ENCODE measurements at regions of chr14 and their contacts with region 1.

Region 1: DNA sequence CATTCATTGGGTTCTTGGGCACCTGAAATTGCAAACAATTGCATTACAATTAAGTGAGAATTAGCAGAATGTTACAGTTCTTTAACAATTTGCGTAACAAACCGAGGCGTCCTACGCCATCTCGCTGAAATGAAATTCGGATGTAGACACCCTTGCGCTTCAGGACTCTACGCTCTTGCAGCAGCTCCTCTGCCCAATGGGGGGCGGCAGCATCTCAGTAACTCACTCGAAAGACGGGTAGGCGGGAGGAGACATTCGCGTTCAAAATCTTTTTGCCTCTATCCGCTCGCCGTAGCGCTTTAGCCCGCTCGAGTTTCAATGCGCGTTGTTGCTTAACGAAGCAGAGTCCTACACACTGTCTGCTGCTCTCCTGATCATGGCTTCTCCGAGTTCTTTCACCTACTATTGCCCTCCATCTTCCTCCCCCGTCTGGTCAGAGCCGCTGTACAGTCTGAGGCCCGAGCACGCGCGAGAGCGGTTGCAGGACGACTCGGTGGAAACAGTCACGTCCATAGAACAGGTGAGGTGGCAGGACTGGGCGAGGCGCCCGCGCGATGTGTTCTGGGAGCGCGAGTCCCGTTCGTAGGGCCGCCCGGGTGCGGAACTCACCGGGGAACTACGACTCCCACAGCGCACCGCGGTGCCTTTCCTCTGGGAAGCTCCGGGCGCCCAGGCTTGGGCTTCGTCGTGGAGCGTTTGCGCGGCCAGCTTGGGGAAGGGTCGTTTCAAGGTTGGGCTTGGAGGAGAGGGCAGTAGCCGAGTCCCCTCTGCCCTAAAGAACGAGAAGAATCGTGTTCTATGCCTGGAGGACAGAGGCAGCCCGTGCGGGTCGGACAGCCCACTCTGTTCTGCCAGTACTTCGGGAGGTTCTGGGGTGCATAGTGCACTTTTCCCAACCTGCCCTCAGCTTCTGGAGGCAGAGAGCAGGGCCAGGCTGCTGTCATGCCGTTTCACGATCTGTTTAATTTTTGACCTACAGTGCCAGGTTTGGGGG is at the start of gene FNTB:
- DNase-seq: peak; percentile 93 to 96 (median 96)
- H3K4me3 ChIP-seq: peak within 1 kb of the TSS; percentile 57 to 98
- H3K4me3 Mint-ChIP-seq: peak within 1 kb of the TSS; percentile 92 to 100 (median 98)
- H3K27ac ChIP-seq: peak within 1 kb of the TSS; percentile 70
- H3K27ac Mint-ChIP-seq: peak within 1 kb of the TSS; percentile 89 to 100 (median 98)
- H3K4me1 ChIP-seq: peaks cover 48% of the 10 kb centered on the region
- H3K4me1 Mint-ChIP-seq: peaks cover 29 to 66% (median 45%) of the 10 kb centered on the region in 4 donors
- H3K27me3 ChIP-seq: no peaks in the 10 kb centered on the region
- H3K27me3 Mint-ChIP-seq: peaks cover 2 to 9% of the 10 kb centered on the region in 2 donors
- total RNA-seq, gene FNTB: 12.1 to 13.6 TPM

Region 2: DNA sequence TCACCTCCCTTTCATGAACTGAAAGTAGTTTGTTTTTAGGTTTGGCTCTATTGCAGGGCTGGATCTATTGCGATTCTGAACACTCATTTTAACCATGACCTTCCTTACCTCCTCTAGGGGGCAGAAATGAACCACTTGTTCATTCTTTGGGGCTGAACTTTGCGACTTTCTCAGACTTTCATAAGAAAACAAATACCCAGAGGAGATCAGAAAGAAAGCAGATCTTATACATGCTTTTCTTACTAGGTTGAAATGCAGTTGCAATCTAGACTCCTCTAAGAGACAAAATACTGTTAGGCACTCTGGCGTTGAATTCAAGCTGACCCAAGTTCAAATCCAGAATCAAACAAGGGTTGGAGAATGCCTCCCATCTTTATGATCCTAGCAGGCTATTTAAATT is 315.3 kb before region 1 on chr14:
- CTCF ChIA-PET with region 1: no interaction called
- POLR2A ChIA-PET with region 1: no interaction called
- intact Hi-C with region 1: loop called (anchors 1 kb)
- DNase-seq: peak; percentile 44 to 77 (median 71)
- H3K4me3 ChIP-seq: no peak overlapping the region
- H3K4me3 Mint-ChIP-seq: no peak overlapping the region
- H3K27ac ChIP-seq: no peak overlapping the region
- H3K27ac Mint-ChIP-seq: peak overlapping the region in 6 of 7 donors; percentile 11 to 79 (median 64)
- H3K4me1 ChIP-seq: peaks cover 37% of the 10 kb centered on the region
- H3K4me1 Mint-ChIP-seq: peaks cover 30 to 38% (median 33%) of the 10 kb centered on the region in 4 donors
- H3K27me3 ChIP-seq: no peaks in the 10 kb centered on the region
- H3K27me3 Mint-ChIP-seq: no peaks in the 10 kb centered on the region

Region 3: DNA sequence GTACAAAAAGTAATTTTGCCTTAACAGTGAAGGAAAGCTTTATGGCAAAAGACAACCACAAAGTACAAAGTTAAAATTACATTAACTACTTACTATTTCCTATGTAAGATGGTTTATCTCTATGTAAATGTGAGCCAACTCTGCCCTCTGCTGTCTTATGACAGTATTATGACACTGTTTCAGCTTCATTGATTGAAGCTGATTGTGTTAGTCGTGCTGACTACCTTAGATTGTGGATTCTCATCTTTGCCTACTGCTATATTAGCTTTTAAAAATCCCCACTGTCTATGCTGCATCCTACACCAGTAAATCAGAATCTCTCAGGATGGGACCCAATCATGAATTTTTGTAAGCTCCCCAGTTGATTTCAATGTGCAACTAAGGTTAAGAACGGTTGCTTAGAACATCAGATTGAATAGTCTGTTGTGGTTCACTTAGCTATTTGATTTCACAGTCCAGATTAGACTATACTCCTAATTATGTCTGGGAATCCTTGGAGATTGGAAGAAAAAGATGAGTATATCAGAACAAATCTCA is 95.0 kb before region 1 on chr14:
- CTCF ChIA-PET with region 1: interaction called, 36 read pairs
- POLR2A ChIA-PET with region 1: interaction called, 3 read pairs
- intact Hi-C with region 1: loop called (anchors 5 kb)
- DNase-seq: peak; percentile 56 to 65 (median 62)
- H3K4me3 ChIP-seq: no peak overlapping the region
- H3K4me3 Mint-ChIP-seq: no peak overlapping the region
- H3K27ac ChIP-seq: no peak overlapping the region
- H3K27ac Mint-ChIP-seq: no peak overlapping the region
- H3K4me1 ChIP-seq: no peaks in the 10 kb centered on the region
- H3K4me1 Mint-ChIP-seq: peaks cover 0 to 3% (median under 1%) of the 10 kb centered on the region in 4 donors
- H3K27me3 ChIP-seq: peaks cover 3% of the 10 kb centered on the region
- H3K27me3 Mint-ChIP-seq: peaks cover 7 to 8% of the 10 kb centered on the region in 2 donors

Region 4: GRCh38 chr14:64971943-64972791 is 14.7 kb before region 1 on chr14 and contains the start of gene RAB15:
- CTCF ChIA-PET with region 1: interaction called, 12 read pairs
- POLR2A ChIA-PET with region 1: interaction called, 7 read pairs
- intact Hi-C with region 1: loop called (anchors 1 kb)
- DNase-seq: peak; percentile 34 to 56 (median 39)
- H3K4me3 ChIP-seq: peak within 1 kb of the TSS; percentile 42 to 62
- H3K4me3 Mint-ChIP-seq: peak within 1 kb of the TSS; percentile 82 to 89 (median 87)
- H3K27ac ChIP-seq: peak within 1 kb of the TSS; percentile 43
- H3K27ac Mint-ChIP-seq: peak within 1 kb of the TSS; percentile 40 to 89 (median 75)
- H3K4me1 ChIP-seq: peaks cover 16% of the 10 kb centered on the region
- H3K4me1 Mint-ChIP-seq: peaks cover 13 to 23% (median 16%) of the 10 kb centered on the region in 4 donors
- H3K27me3 ChIP-seq: no peaks in the 10 kb centered on the region
- H3K27me3 Mint-ChIP-seq: no peaks in the 10 kb centered on the region
- total RNA-seq, gene RAB15: 5.2 to 5.4 TPM

Region 5: DNA sequence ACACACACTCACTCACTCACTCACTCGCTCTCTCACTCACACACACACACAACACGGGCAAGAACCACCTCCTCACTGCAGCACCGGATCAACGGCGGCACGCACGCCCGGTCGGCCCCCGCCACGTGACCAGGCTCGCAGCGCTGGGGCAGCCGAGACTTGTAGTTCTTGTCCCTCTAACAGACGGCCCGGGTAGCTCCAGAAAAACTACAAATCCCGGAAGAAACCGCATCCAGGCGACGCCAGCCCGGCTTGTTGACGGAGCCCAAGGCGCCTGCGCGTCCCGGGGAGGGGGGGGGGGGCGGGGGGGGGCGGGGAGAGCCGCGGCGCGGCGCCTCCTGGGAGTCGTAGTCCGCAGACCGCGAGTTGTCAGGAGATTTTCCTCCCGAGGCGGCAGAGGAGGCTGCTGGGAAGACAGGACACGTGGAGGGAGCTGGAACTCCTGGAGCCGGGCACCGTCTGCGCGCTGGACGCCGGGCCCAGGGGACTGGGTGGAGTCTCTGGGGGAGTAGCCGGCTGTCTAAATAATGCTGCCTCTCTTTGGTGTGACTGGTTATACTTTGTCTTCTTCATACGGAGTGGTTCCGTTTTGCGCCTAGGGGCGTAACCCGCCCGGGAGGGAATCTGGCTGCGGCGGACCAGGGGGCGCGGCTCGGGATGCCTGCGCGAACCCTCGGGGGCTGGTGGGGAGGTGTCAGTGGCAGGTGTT is 115.7 kb after region 1 on chr14 and contains the start of gene MAX:
- CTCF ChIA-PET with region 1: interaction called, 8 read pairs
- POLR2A ChIA-PET with region 1: interaction called, 6 read pairs
- intact Hi-C with region 1: loop called (anchors 1 kb)
- DNase-seq: peak; percentile 98 to 100 (median 100)
- H3K4me3 ChIP-seq: peak within 1 kb of the TSS; percentile 77 to 100
- H3K4me3 Mint-ChIP-seq: peak within 1 kb of the TSS; percentile 91 to 100 (median 96)
- H3K27ac ChIP-seq: peak within 1 kb of the TSS; percentile 96
- H3K27ac Mint-ChIP-seq: peak within 1 kb of the TSS; percentile 92 to 99 (median 97)
- H3K4me1 ChIP-seq: peaks cover 41% of the 10 kb centered on the region
- H3K4me1 Mint-ChIP-seq: peaks cover 24 to 49% (median 35%) of the 10 kb centered on the region in 4 donors
- H3K27me3 ChIP-seq: no peaks in the 10 kb centered on the region
- H3K27me3 Mint-ChIP-seq: peaks cover 2 to 3% of the 10 kb centered on the region in 2 donors
- total RNA-seq, gene MAX: 188 to 212 TPM

Region 6: DNA sequence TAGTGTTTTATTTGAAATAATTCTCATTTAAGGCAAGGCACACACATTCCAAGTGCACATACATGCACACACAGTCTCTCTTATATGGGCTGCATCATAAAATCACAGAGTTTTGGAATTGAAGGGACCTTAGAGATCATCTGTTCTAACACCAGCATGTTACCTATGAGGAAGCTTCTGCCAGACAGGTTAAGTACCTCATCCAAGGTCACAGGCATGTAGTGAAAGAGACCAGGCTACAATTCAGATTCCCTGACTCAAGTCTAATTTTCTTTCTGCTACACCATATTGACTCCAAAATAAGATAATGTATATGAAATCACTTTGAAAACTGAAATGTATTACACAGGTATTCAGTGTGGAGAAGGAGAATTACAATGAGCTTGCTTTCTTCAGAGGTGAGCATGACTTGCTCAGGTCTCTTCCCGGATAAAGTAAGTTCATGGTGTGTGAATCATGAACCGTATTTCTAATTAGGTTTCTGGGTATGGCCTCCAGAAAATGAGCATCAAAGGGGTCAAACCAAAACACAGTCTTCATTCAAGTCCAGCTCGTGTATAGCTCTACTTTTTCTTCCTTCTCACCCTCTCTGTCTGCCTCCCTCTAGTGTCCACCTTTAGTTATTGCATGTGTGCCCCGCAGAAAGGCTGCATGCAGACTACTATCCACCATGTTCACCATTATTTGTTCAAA is 837.6 kb after region 1 on chr14:
- CTCF ChIA-PET with region 1: interaction called, 3 read pairs
- POLR2A ChIA-PET with region 1: no interaction called
- intact Hi-C with region 1: loop called (anchors 10 kb)
- DNase-seq: peak; percentile 62 to 70 (median 64)
- H3K4me3 ChIP-seq: no peak overlapping the region
- H3K4me3 Mint-ChIP-seq: peak overlapping the region in 1 of 8 donors; percentile 10
- H3K27ac ChIP-seq: no peak overlapping the region
- H3K27ac Mint-ChIP-seq: no peak overlapping the region
- H3K4me1 ChIP-seq: peaks cover 9% of the 10 kb centered on the region
- H3K4me1 Mint-ChIP-seq: peaks cover 10 to 14% (median 11%) of the 10 kb centered on the region in 4 donors
- H3K27me3 ChIP-seq: no peaks in the 10 kb centered on the region
- H3K27me3 Mint-ChIP-seq: no peaks in the 10 kb centered on the region